BJ (cell line): ENCODE measurements at regions of chr5 and their contacts with region 1.

Region 1: DNA sequence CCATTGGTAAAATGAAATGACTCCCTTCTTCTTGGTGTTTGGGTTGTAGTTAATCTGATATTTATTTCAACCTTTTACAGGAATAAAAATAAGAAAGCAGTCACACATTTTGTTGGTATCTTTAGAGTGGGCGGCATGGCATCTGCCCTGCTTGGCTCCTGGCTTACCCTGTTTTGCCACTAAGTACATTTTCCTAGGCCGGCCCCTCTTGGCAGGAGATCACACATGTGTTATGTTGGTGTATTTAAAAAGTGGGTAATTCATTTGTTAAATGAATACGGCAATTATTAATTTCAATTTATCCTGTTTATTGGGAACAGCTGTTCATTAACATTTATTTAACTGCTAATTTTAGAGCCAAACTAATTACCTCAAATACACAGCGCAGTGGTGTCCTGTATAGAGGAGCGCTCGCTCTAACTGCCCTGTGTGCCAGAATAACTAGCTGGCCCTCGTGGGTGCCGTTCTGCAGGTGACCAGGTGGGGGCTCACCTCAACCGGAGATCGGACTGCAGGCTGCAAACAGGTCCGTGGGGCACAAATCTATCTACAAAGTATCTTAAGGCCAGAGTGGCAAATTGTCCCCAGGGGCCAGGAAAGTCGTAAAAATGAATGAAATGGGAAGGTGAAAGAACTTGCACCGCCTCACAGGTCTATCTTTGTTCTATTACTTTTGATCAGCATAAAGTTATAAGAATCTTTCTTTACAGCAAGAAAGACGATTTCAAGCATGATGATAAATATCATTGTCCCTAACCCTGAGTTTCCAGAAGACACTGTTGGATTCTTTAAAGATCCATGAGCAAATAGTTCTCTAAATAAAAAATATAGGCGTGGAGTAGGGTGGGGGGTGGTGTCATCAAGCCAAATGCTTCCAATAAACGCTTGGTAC is 26.2 kb upstream of the GPR151 start:
- DNase-seq: no peak
- H3K4me3 ChIP-seq: no peak overlapping the region
- H3K27me3 ChIP-seq: peaks cover 3% of the 10 kb centered on the region; the same call in 1 of the 2 replicates
- CTCF ChIP-seq: peak; percentile 85

Region 2: GRCh38 chr5:146507428-146507827 is 34.8 kb before region 1 on chr5:
- CTCF ChIA-PET with region 1: no interaction called
- POLR2A ChIA-PET with region 1: no interaction called
- DNase-seq: no peak
- H3K4me3 ChIP-seq: no peak overlapping the region
- H3K27me3 ChIP-seq: no peaks in the 10 kb centered on the region
- CTCF ChIP-seq: no peak

Region 3: GRCh38 chr5:146622391-146622790 is 80.2 kb after region 1 on chr5:
- CTCF ChIA-PET with region 1: interaction called, 13 read pairs
- POLR2A ChIA-PET with region 1: no interaction called
- DNase-seq: no peak
- H3K4me3 ChIP-seq: no peak overlapping the region
- H3K27me3 ChIP-seq: no peaks in the 10 kb centered on the region
- CTCF ChIP-seq: peak; percentile 26; the same call in 1 of the 2 replicates

Region 4: GRCh38 chr5:146813346-146814157 is 271.3 kb after region 1 on chr5:
- CTCF ChIA-PET with region 1: no interaction called
- POLR2A ChIA-PET with region 1: no interaction called
- DNase-seq: no peak
- H3K4me3 ChIP-seq: no peak overlapping the region
- H3K27me3 ChIP-seq: no peaks in the 10 kb centered on the region
- CTCF ChIP-seq: no peak